ENCODE measurements at regions of chr20 and their contacts with region 1.

Region 1: GRCh38 chr20:51128198-51128597 is 105.3 kb upstream of the KCNG1 start:
- DNase-seq: peak; percentile 95
- ATAC-seq: peak; percentile 86
- H3K4me3 ChIP-seq: no peak overlapping the region
- H3K27ac ChIP-seq: peak overlapping the region; percentile 40
- H3K4me1 ChIP-seq: peaks cover 45% of the 10 kb centered on the region
- H3K27me3 ChIP-seq: no peaks in the 10 kb centered on the region
- CTCF ChIP-seq: no peak

Region 2: GRCh38 chr20:51022803-51023630 is 105.2 kb before region 1 on chr20 and contains the start of gene KCNG1:
- CTCF ChIA-PET with region 1: no interaction called
- POLR2A ChIA-PET with region 1: no interaction called
- intact Hi-C with region 1: loop called (anchors 10 kb)
- DNase-seq: peak; percentile 95
- ATAC-seq: peak; percentile 97
- H3K4me3 ChIP-seq: peak within 1 kb of the TSS; percentile 72
- H3K27ac ChIP-seq: no peak within 1 kb of the TSS
- H3K4me1 ChIP-seq: peaks cover 21% of the 10 kb centered on the region
- H3K27me3 ChIP-seq: no peaks in the 10 kb centered on the region
- CTCF ChIP-seq: no peak
- total RNA-seq, gene KCNG1: 61.5 and 74.1 TPM in 2 replicates

Region 3: GRCh38 chr20:51029963-51030920 is 98.0 kb before region 1 on chr20:
- CTCF ChIA-PET with region 1: interaction called, 3 read pairs
- POLR2A ChIA-PET with region 1: interaction called, 10 read pairs
- intact Hi-C with region 1: loop called (anchors 10 kb)
- DNase-seq: no peak
- ATAC-seq: no peak
- H3K4me3 ChIP-seq: no peak overlapping the region
- H3K27ac ChIP-seq: no peak overlapping the region
- H3K4me1 ChIP-seq: peaks cover 9% of the 10 kb centered on the region
- H3K27me3 ChIP-seq: peaks cover 17% of the 10 kb centered on the region
- CTCF ChIP-seq: no peak